Right ventricle myocardium superior (tissue), 1 donor: ENCODE measurements at regions of chr1 and their contacts with region 1.

Region 1: DNA sequence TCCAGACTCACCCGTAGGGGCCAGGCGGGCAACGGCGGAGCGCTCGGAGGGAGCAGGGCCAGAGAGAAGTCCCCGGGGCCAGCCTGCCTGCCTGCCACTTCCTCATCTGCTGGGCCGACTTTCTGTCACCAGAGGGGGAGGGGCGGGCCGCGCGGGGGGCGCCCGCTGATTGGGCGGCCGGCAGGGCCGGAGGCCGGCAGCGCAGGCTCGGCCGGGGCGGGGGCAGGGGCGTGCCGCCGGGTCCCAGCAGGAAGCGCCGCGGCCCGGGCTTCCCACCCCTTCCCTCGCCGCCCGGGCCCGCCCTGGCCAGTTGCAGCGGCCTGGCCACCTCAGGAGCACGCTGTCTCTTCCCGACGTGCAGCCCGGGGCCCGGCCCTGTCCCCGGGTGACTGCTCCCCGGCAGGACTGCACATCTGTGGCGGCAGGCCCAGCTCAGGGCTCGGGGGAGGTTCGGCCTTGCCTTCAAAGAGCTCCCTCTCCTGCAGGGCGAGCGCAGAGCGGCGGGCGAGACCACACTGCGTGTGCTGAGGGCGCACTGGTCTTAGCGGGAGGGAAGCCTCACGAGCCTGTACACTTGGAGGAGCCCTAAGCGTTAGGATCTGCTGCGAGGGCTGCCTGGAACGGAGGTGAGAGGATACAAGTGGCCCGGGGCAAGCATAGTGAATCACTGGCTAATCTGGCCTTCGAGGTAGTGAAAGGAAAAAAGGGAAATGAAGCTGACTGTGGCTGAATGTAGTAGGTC is at the start of gene ELOVL1:
- DNase-seq: peak; percentile 96
- ATAC-seq: peak; percentile 98
- total RNA-seq, gene ELOVL1: 29.3 TPM

Region 2: GRCh38 chr1:43238085-43238484 is 130.0 kb before region 1 on chr1:
- intact Hi-C with region 1: loop called (anchors 5 kb)
- DNase-seq: peak; percentile 63
- ATAC-seq: peak; percentile 82